ENCODE measurements at regions of chr1 and their contacts with region 1.

Region 1: GRCh38 chr1:85707990-85708828 is at the start of gene ZNHIT6:
- DNase-seq: peak; percentile 92
- ATAC-seq: peak; percentile 97
- H3K4me3 Mint-ChIP-seq: no peak within 1 kb of the TSS
- H3K27ac Mint-ChIP-seq: no peak within 1 kb of the TSS
- H3K4me1 Mint-ChIP-seq: peaks cover 27% of the 10 kb centered on the region
- H3K27me3 Mint-ChIP-seq: no peaks in the 10 kb centered on the region
- CTCF ChIP-seq: peak; percentile 58
- total RNA-seq, gene ZNHIT6: 22.4 to 23.9 TPM

Region 2: DNA sequence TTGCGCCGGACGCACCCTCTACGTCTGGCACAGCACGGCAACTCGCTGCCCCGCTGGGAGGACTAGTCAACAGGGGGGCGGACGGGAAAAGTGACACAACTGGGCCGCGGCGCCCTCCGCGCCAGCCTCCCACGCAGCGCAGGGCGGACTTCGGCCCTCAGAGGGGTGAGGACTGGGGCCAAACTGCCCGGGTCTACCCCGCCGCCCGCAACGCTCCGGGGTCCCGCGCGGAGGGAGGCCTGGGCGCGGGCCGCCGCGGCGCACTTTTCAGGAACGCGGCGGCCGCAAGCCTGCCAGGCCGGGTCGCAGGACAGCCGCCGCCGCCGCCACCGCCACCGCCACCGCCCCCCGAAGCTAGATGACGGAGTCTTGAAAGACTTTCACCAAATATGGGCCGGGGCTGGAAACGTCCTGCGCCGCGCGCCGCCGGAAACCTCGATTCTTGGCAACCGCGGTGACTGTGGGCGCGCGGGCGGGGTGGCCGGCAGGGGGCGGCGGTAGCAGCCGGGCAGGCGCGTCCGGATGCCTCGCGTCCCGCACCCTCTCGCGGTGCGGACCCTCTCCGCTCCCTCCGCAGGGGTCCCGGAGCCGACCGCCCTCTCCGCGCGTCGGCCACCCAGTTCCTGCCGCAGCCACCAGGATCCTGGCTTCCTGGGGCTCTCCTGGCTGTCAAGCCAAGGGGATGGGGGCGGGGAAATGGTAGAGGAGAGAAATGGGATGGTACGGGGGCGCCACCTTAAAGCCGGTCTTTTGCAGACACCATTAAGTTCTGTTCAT is 131.4 kb before region 1 on chr1:
- CTCF ChIA-PET with region 1: no interaction called
- POLR2A ChIA-PET with region 1: no interaction called
- intact Hi-C with region 1: no loop called
- DNase-seq: peak; percentile 77
- ATAC-seq: peak; percentile 62
- H3K4me3 Mint-ChIP-seq: peak overlapping the region; percentile 71
- H3K27ac Mint-ChIP-seq: no peak overlapping the region
- H3K4me1 Mint-ChIP-seq: peaks cover 29% of the 10 kb centered on the region
- H3K27me3 Mint-ChIP-seq: peaks cover 72% of the 10 kb centered on the region
- CTCF ChIP-seq: peak; percentile 49

Region 3: DNA sequence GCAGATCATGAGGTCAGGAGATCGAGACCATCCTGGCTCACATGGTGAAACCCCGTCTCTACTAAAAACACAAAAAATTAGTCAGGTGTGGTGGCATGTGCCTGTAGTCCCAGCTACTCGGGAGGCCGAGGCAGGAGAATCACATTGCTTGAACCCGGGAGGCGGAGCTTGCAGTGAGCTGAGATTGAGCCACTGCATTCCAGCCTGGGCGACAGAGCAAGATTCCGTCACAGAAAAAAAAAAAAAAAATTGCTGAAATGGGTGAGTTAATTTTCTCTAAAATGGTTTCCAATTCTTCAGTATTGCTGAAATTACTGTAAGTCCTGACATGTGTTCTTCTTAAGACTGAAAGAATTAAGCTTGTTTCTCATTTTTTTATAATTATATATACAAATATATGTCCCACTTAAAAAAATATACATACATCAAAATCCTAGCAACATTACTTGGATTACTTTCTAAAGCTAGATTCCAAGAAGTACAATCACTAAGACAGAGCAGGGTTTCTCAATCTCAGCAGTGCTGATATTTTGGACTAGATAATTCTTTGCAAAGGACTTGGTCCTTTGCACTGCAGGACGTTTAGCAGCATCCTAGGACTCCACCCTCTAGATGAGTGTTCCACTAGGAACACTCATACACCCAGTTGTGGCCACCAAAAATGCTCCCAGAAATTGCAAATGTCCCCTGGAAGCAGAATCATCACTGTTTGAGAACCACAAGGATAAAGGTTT is 24.8 kb before region 1 on chr1:
- CTCF ChIA-PET with region 1: interaction called, 3 read pairs
- POLR2A ChIA-PET with region 1: no interaction called
- intact Hi-C with region 1: loop called (anchors 2 kb)
- DNase-seq: no peak
- ATAC-seq: no peak
- H3K4me3 Mint-ChIP-seq: no peak overlapping the region
- H3K27ac Mint-ChIP-seq: no peak overlapping the region
- H3K4me1 Mint-ChIP-seq: peaks cover 3% of the 10 kb centered on the region
- H3K27me3 Mint-ChIP-seq: no peaks in the 10 kb centered on the region
- CTCF ChIP-seq: no peak

Region 4: GRCh38 chr1:85692730-85693314 is 15.4 kb before region 1 on chr1:
- CTCF ChIA-PET with region 1: interaction called, 10 read pairs
- POLR2A ChIA-PET with region 1: interaction called, 3 read pairs
- intact Hi-C with region 1: no loop called
- DNase-seq: no peak
- ATAC-seq: no peak
- H3K4me3 Mint-ChIP-seq: no peak overlapping the region
- H3K27ac Mint-ChIP-seq: no peak overlapping the region
- H3K4me1 Mint-ChIP-seq: peaks cover 18% of the 10 kb centered on the region
- H3K27me3 Mint-ChIP-seq: no peaks in the 10 kb centered on the region
- CTCF ChIP-seq: peak; percentile 24

Measured in activated CD8-positive, alpha-beta T cell treated with anti-CD3 and anti-CD28 coated beads for 36 hours (primary cell).